B cell (primary cell): ENCODE measurements at regions of chr19 and their contacts with region 1.

Region 1: GRCh38 chr19:17183858-17184321 is 31.3 kb upstream of the USE1 start:
- DNase-seq: peak; percentile 79
- ATAC-seq: peak; percentile 83
- H3K4me3 ChIP-seq: peak overlapping the region in 4 of 5 experiments; percentile 17 to 53 (median 33)
- H3K4me3 Mint-ChIP-seq: peak overlapping the region; percentile 85
- H3K27ac ChIP-seq: peak overlapping the region; percentile 66 to 76
- H3K27ac Mint-ChIP-seq: peak overlapping the region; percentile 88
- H3K4me1 ChIP-seq: peaks cover 19 to 25% of the 10 kb centered on the region in 2 donors
- H3K4me1 Mint-ChIP-seq: peaks cover 30% of the 10 kb centered on the region
- H3K27me3 ChIP-seq: no peaks in the 10 kb centered on the region
- H3K27me3 Mint-ChIP-seq: no peaks in the 10 kb centered on the region
- CTCF ChIP-seq: no peak

Region 2: DNA sequence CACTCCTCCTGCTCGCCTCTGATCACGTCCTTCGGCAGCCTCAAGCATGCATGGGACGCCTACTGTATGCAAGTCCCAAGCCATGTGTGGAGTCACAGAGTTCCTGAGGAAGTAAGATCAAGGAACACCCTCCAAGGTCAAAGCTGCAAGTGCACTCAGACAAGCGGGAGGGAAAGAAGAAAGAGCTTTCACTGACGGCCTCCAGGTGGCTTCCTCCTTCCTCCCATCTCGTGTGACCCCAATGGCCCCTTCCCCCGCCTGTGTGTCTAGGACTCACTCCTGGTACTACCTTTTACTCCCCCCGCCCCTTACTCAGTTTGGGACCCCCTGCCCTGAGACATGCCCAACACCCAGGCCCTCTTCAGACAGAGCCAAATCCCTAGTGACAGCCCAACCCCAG is 114.7 kb before region 1 on chr19:
- CTCF ChIA-PET with region 1: interaction called, 24 read pairs
- POLR2A ChIA-PET with region 1: interaction called, 3 read pairs
- intact Hi-C with region 1: loop called (anchors 1 kb)
- DNase-seq: no peak
- ATAC-seq: no peak
- H3K4me3 ChIP-seq: no peak overlapping the region
- H3K4me3 Mint-ChIP-seq: no peak overlapping the region
- H3K27ac ChIP-seq: no peak overlapping the region
- H3K27ac Mint-ChIP-seq: no peak overlapping the region
- H3K4me1 ChIP-seq: peaks cover 24 to 45% of the 10 kb centered on the region in 2 donors
- H3K4me1 Mint-ChIP-seq: peaks cover 56% of the 10 kb centered on the region
- H3K27me3 ChIP-seq: no peaks in the 10 kb centered on the region
- H3K27me3 Mint-ChIP-seq: no peaks in the 10 kb centered on the region
- CTCF ChIP-seq: no peak

Region 3: DNA sequence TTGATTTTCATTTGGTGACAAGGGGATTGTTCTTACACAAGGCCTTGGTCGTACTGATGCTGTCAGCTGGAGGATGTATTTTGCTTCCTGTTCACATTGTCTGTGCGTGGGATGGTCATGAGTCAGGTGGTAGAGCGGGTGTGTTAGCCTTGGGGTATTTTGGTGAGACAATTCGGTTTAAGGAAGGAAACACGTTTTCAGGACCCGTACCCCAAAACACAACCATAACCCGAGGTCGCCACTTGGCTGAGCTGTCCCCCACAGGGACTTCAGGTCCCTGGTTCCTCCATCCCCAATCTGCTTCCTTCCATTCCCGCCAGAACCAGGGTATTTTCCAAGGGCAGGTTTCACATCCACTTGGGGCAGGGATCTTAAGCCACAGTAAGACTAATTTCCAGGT is 93.3 kb before region 1 on chr19:
- CTCF ChIA-PET with region 1: no interaction called
- POLR2A ChIA-PET with region 1: no interaction called
- intact Hi-C with region 1: no loop called
- DNase-seq: peak; percentile 84
- ATAC-seq: peak; percentile 73
- H3K4me3 ChIP-seq: peak overlapping the region in 1 of 5 experiments; percentile 1
- H3K4me3 Mint-ChIP-seq: peak overlapping the region; percentile 48
- H3K27ac ChIP-seq: peak overlapping the region; percentile 82 to 88
- H3K27ac Mint-ChIP-seq: peak overlapping the region; percentile 47
- H3K4me1 ChIP-seq: peaks cover 36 to 46% of the 10 kb centered on the region in 2 donors
- H3K4me1 Mint-ChIP-seq: peaks cover 57% of the 10 kb centered on the region
- H3K27me3 ChIP-seq: no peaks in the 10 kb centered on the region
- H3K27me3 Mint-ChIP-seq: no peaks in the 10 kb centered on the region
- CTCF ChIP-seq: no peak

Region 4: DNA sequence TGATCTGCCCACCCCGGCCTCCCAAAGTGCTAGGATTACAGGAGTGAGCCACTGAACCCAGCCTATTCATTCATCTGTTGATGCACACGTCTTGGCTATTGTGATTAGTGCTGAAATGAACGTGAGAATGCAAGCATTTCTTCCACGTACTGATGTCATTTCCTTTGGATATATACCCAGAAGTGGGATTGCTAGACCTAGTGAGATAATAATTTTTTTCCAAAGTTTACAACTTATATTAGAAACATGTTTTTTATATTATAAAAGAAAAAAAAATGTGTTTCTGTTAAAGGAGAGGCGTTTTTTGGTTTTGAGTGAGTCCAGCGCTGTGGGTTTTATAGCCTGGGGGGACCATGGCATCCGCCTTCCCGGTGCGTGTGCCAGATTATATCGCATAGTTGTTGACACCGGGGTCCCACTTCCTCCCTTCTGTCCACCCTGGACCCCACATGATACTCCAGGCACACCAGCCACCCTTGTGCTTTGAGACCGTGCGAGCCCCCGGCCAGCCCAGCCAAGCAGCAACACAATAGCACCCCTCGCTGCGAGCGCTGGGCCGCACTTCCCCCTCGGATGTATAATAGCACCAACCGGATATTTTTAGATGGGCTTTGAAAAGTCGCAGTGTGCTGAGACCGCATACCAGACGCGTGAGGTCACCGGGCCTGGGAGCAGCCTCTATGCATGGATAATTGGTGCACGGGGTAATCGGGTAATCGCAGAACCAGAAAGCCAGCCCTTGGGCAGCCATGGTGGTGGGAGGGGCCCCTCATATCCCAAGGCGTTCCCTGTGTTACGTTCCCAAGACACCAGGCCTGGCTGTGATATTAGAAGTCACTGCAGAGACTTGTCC is 48.7 kb before region 1 on chr19:
- CTCF ChIA-PET with region 1: interaction called, 4 read pairs
- POLR2A ChIA-PET with region 1: interaction called, 4 read pairs
- intact Hi-C with region 1: loop called (anchors 5 kb)
- DNase-seq: peak; percentile 88
- ATAC-seq: peak; percentile 88
- H3K4me3 ChIP-seq: peak overlapping the region in 3 of 5 experiments; percentile 22 to 49 (median 31)
- H3K4me3 Mint-ChIP-seq: peak overlapping the region; percentile 86
- H3K27ac ChIP-seq: peak overlapping the region; percentile 87 to 95
- H3K27ac Mint-ChIP-seq: peak overlapping the region; percentile 96
- H3K4me1 ChIP-seq: peaks cover 38 to 55% of the 10 kb centered on the region in 2 donors
- H3K4me1 Mint-ChIP-seq: peaks cover 60% of the 10 kb centered on the region
- H3K27me3 ChIP-seq: no peaks in the 10 kb centered on the region
- H3K27me3 Mint-ChIP-seq: no peaks in the 10 kb centered on the region
- CTCF ChIP-seq: no peak

Region 5: GRCh38 chr19:17266975-17267788 is 83.3 kb after region 1 on chr19 and contains the start of gene BABAM1:
- CTCF ChIA-PET with region 1: interaction called, 3 read pairs
- POLR2A ChIA-PET with region 1: interaction called, 5 read pairs
- intact Hi-C with region 1: loop called (anchors 1 kb)
- DNase-seq: peak; percentile 98
- ATAC-seq: peak; percentile 89
- H3K4me3 ChIP-seq: peak within 1 kb of the TSS; percentile 76 to 95 (median 87)
- H3K4me3 Mint-ChIP-seq: peak within 1 kb of the TSS; percentile 84
- H3K27ac ChIP-seq: peak within 1 kb of the TSS; percentile 56 to 67
- H3K27ac Mint-ChIP-seq: peak within 1 kb of the TSS; percentile 86
- H3K4me1 ChIP-seq: peaks cover 6 to 24% of the 10 kb centered on the region in 2 donors
- H3K4me1 Mint-ChIP-seq: peaks cover 18% of the 10 kb centered on the region
- H3K27me3 ChIP-seq: no peaks in the 10 kb centered on the region
- H3K27me3 Mint-ChIP-seq: no peaks in the 10 kb centered on the region
- CTCF ChIP-seq: no peak
- total RNA-seq, gene BABAM1: 126 and 129 TPM in 2 replicates